ENCODE measurements at regions of chr2 and their contacts with region 1.

Region 1: GRCh38 chr2:75646583-75647425 is at the start of gene MRPL19:
- DNase-seq: peak; percentile 49 to 86 (median 72)
- ATAC-seq: peak; percentile 95 to 98
- H3K4me3 Mint-ChIP-seq: peak within 1 kb of the TSS; percentile 93 to 97 (median 95)
- H3K27ac Mint-ChIP-seq: peak within 1 kb of the TSS; percentile 86 to 96 (median 94)
- H3K4me1 Mint-ChIP-seq: peaks cover 13 to 44% (median 33%) of the 10 kb centered on the region in 4 donors
- H3K27me3 Mint-ChIP-seq: peaks cover 0 to 2% (median 0%) of the 10 kb centered on the region in 5 donors
- polyA plus RNA-seq, gene MRPL19: 29.8 to 40.8 (median 38.5) TPM

Region 2: DNA sequence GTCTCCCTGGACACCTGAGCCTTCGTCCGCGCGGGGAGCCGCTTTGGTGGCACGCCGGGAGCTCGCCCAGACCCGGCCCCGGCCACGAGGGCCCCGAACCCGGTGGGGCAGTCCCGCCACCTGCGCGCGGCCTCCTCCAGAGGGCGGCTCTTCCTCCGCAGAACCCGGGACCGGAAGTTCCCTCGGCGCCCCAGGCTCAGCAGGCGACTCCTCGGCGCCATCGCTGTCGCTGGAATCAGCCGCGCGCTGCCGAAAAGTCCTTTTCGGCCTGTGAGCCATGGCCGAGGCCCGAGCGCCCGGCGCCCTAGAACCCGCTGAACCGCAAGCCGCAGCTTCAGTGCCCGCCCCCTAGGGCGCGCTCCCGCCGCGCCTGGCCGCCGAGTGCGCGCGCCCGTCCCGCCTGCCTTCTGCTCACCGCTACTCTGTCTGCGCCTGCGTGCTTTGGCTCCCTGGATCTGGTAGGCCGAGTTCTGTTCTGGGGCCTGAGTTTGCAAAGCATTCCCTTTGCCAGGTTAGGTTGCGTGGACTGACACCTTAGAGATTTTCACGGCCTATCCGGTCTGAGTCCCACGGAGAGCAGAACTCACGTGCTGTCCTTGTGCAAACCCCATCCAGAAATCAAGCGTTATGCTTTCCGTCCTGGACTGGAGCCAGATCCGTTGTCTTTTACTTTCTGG is 63.9 kb after region 1 on chr2 and contains the start of gene GCFC2:
- POLR2A ChIA-PET with region 1: interaction called, 13 read pairs
- DNase-seq: peak; percentile 71 to 87 (median 79)
- ATAC-seq: peak; percentile 91
- H3K4me3 Mint-ChIP-seq: peak within 1 kb of the TSS; percentile 88 to 98 (median 94)
- H3K27ac Mint-ChIP-seq: peak within 1 kb of the TSS; percentile 93 to 99 (median 98)
- H3K4me1 Mint-ChIP-seq: peaks cover 10 to 33% (median 32%) of the 10 kb centered on the region in 4 donors
- H3K27me3 Mint-ChIP-seq: peaks cover 0 to 2% (median 0%) of the 10 kb centered on the region in 5 donors
- polyA plus RNA-seq, gene GCFC2: 29.9 to 38.8 (median 34.5) TPM

Measured in naive thymus-derived CD8-positive, alpha-beta T cell (primary cell).